Mucosa of descending colon (tissue), 3 donors: ENCODE measurements at regions of chr16 and their contacts with region 1.

Region 1: GRCh38 chr16:84629580-84629979 is 11.7 kb upstream of the COTL1 start:
- DNase-seq: no peak
- ATAC-seq: no peak
- H3K4me3 ChIP-seq: no peak overlapping the region
- H3K4me1 ChIP-seq: no peaks in the 10 kb centered on the region
- CTCF ChIP-seq: no peak

Region 2: DNA sequence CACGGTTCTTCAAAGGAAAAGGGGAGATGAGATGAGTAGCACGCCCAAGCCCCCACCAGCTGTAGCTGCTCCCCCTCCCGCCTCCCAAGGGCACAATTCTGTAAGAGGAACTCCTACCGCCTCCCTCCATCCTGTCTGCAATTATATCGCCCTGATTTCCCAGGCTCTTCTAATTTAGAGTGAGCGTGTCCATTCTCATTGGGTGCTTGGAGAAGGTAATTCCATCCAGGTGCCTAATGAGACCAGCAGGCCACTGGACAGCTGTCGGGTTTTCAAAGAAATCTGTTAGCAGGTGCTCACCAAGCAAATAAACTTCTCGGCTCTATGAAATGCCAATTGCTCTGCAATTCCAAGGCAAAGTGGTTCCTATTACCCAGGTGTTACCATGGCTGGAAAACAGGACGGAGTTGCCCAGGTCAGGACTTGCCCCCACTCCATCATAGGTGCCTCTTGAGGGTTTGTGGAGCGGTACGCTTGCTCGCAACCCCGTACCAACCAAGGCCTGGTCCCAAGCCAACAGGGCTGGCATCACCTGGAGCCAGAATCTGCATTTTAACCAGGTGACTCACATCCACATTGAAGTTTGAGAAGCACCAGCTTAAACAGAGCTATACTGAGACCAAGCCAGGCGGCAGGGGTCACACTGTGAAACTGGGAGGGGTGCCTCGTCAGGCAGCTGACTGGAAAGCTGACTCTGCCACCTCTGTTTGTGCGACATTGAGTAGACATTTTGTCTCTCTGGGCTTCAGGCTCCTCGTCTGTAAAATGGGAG is 108.7 kb before region 1 on chr16:
- intact Hi-C with region 1: loop called in 1 of 2 experiments (anchors 5 kb)
- DNase-seq: no peak
- ATAC-seq: peak; percentile 55
- H3K4me3 ChIP-seq: no peak overlapping the region
- H3K4me1 ChIP-seq: peaks cover 12% of the 10 kb centered on the region
- CTCF ChIP-seq: no peak

Region 3: DNA sequence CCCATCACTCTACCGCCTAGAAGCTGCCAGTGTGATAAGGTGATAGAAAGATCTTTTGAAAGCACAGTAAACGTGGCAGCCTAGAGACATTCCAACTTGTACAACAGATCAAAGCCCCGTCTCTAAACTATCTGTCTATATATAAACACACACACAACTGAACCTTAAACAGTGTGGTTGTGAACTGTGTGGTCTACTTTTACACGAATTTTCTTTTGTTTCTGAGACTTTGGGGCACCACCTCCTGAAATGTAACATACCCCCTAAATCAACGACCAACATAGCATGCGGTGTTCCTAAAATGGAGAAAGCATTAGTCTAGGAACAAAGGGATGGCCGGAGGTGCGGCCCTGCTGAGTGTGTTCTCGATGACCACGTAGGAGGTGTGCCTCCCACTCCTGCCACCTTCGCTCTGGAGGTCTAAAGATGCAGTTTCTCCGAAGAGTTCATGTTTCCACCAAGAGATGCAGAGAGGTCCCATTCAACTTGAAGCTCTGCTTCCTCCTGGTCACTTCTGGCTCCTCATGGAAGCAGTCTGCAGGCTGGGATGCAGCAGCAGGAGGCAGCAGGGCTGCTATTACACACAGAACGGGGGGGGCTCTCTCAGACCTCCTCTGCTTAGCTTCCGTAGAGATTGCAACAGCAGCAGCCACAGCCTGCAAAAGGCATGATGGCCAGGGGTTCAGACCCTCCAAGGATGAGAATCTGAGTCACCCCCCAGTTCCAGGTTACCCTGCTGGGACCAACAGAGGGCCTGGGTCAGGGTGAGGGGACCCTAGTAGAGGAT is 47.6 kb after region 1 on chr16:
- intact Hi-C with region 1: no loop called
- DNase-seq: no peak
- ATAC-seq: no peak
- H3K4me3 ChIP-seq: no peak overlapping the region
- H3K4me1 ChIP-seq: no peaks in the 10 kb centered on the region
- CTCF ChIP-seq: no peak